Testis (tissue), 5 donors: ENCODE measurements at regions of chr1 and their contacts with region 1.

Region 1: DNA sequence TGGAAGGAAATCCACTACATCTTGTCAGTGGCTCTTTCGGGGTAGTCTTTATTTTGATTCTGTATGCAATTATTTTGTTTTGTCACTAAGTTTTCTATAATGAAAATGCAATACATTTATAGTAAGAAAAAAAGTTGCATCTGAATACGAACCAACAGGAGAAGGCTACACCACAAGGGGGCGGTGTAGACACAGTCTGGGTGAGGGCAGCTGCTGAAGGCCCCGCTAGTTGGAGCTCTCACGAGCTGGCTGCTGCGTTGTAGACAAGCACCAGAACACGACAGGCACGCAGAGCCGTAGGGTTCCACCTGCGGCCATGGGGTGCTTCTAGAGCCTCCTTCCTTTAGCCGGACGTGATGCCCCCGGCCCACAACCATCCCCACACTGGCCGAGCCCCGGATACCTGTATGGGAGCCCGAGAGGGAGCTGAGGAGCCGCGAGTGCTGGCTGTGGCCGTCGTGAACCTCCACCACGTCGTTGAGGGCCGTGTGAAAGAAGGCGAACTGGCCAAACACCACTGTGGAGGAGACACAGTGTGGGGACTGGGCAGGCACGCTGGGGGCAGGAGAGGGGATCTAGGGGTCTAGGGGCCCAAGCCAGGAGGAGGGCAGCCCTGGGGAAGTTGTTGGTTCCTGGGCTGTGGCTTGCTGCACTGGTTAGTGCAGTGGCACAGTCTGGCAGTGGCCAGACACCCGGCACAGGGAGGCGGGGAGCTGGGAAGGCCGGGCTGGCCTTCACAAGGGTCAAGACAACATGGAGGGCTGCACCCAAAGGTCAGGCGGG is 160.8 kb downstream of the ZSCAN20 start:
- DNase-seq: peak; percentile 97
- H3K4me3 ChIP-seq: peak overlapping the region in 1 of 2 donors; percentile 32
- H3K27ac ChIP-seq: no peak overlapping the region
- H3K4me1 ChIP-seq: no peaks in the 10 kb centered on the region
- H3K27me3 ChIP-seq: no peaks in the 10 kb centered on the region
- CTCF ChIP-seq: peak; percentile 85 to 92 (median 91)
- POLR2A ChIP-seq: no peak

Region 2: GRCh38 chr1:33443080-33443704 is 190.0 kb before region 1 on chr1:
- intact Hi-C with region 1: no loop called
- DNase-seq: no peak
- H3K4me3 ChIP-seq: no peak overlapping the region
- H3K27ac ChIP-seq: no peak overlapping the region
- H3K4me1 ChIP-seq: peaks cover 5% of the 10 kb centered on the region
- H3K27me3 ChIP-seq: no peaks in the 10 kb centered on the region
- CTCF ChIP-seq: no peak
- POLR2A ChIP-seq: no peak

Region 3: GRCh38 chr1:34037109-34037508 is 403.9 kb after region 1 on chr1:
- intact Hi-C with region 1: no loop called
- DNase-seq: no peak
- H3K4me3 ChIP-seq: no peak overlapping the region
- H3K27ac ChIP-seq: no peak overlapping the region
- H3K4me1 ChIP-seq: peaks cover 6% of the 10 kb centered on the region
- H3K27me3 ChIP-seq: no peaks in the 10 kb centered on the region
- CTCF ChIP-seq: no peak
- POLR2A ChIP-seq: no peak

Region 4: DNA sequence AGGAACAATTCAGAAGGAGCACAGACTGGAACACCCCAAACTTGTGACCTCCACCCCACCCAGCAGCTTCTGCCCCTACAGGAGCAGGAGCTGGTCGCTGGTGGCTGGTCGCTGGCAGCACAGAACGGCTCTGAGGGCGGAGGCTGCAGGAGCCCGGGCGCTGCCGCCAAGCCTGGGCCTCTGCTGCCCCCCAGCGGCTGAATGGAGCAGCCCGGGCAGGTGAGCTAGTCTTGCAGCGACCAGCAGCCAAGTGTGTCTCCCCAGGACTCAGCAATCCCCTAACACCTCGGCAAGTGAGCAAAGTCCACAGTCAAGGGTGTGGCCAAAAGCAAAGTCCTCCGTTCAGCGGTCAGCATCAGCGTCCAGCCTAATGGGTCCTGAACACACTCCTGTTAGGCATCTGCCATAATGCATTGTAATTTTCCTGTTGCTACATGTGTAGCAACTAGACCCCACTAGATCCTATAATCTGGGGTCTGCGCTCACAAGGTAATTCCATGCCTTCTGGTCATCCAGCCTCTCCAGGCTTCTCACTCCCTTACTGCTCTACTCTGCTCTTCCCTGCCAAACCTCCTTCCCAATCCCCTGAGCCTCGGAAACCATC is 1109.6 kb after region 1 on chr1:
- intact Hi-C with region 1: loop called (anchors 10 kb)
- DNase-seq: peak; percentile 87
- H3K4me3 ChIP-seq: no peak overlapping the region
- H3K27ac ChIP-seq: no peak overlapping the region
- H3K4me1 ChIP-seq: no peaks in the 10 kb centered on the region
- H3K27me3 ChIP-seq: no peaks in the 10 kb centered on the region
- CTCF ChIP-seq: peak; percentile 44 to 92 (median 80)
- POLR2A ChIP-seq: no peak